H1 (cell line): ENCODE measurements at regions of chr2 and their contacts with region 1.

Region 1: DNA sequence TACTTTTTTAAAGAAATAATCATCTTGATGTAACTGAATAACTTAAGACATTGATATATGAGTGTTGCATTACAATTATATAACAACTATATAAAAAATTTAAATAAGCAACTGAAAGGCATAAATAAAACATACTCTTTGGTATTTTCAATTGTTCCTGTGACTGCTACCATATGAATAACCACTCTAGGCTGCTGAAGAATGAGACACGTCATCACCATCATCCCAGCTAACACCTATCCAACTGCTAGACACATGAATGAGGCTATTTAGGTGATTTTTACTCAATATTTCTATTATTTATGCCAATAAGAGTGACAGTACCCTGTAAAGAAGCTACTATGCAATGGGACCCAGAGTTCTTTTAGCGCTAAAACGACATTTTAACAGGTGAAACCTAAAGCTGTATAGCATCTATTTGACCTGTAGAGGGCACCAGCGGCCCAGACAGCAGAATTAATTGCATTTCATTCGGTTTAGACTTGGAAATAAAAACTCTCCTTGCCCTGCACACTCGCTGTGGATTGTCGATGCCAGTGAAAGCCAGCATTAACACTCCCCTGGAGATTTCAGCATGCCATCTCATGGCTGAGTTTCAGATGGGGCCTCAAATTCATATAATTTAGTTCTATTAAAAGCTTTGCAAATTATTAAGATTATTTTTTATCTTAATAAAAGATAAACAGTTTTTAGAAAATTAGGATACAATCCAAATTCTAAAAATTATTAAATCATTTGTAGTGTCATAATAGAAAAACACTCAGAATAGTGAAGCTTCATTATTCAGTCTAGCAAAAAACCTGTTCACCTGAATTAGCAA is 89.4 kb upstream of the MAP2 start:
- DNase-seq: peak in 1 of 2 experiments; percentile 61
- H3K4me3 ChIP-seq: no peak overlapping the region
- H3K27ac ChIP-seq: no peak overlapping the region
- H3K4me1 ChIP-seq: no peaks in the 10 kb centered on the region
- H3K27me3 ChIP-seq: no peaks in the 10 kb centered on the region
- CTCF ChIP-seq: peak in 2 of 3 experiments; percentile 81 to 83; a peak in 3 of 4 replicates
- EP300 ChIP-seq: no peak
- POLR2A ChIP-seq: no peak
- RAD21 ChIP-seq: peak; percentile 93 to 94

Region 2: DNA sequence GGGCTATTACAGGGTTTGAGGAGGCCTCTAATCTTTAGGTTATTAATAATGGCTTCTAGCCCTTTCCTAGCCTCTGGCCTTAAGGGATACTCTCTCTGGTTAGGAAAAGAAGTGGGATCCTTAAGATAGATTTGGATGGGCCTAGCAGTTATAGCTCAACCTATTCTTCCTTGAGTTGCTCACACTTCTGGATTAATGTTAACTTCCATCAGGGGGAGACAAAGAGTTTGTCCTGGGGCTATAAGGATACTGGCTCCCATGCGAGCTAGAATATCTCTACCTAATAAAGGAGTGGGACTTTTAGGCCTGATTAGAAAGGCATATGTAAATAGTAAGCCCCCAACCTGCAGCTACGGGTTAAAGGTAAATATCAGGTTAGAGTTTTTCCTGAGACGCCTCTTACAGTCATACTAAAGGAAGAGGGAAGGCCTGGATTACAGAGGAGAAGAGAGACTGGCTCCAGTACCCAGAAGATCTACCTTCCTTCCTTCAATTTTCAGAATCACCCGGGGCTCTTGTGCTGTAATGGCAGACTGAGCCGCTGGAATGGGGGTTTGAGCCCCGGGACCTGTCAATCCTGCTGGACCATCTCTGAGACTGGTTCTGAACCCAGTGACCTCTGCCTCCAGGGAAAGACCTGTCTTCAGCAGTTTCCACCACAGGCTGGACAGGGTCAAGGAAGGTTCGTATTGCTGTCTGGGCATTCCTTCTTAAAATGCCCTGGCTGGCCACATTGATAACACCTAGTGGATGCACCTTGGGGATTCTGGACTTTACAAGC is 941.9 kb before region 1 on chr2:
- CTCF ChIA-PET with region 1: interaction called, 12 read pairs
- POLR2A ChIA-PET with region 1: no interaction called
- DNase-seq: no peak
- H3K4me3 ChIP-seq: no peak overlapping the region
- H3K27ac ChIP-seq: no peak overlapping the region
- H3K4me1 ChIP-seq: no peaks in the 10 kb centered on the region
- H3K27me3 ChIP-seq: no peaks in the 10 kb centered on the region
- CTCF ChIP-seq: peak in 1 of 3 experiments; percentile 22; a peak in 1 of 4 replicates
- EP300 ChIP-seq: no peak
- POLR2A ChIP-seq: no peak
- RAD21 ChIP-seq: no peak

Region 3: GRCh38 chr2:208466151-208466919 is 868.1 kb before region 1 on chr2:
- CTCF ChIA-PET with region 1: interaction called, 10 read pairs
- POLR2A ChIA-PET with region 1: no interaction called
- DNase-seq: peak; percentile 10 to 57
- H3K4me3 ChIP-seq: no peak overlapping the region
- H3K27ac ChIP-seq: no peak overlapping the region
- H3K4me1 ChIP-seq: no peaks in the 10 kb centered on the region
- H3K27me3 ChIP-seq: peaks cover 0 to 3% (median 0%) of the 10 kb centered on the region in 4 experiments; a peak in 2 of 7 replicates
- CTCF ChIP-seq: peak in 2 of 3 experiments; percentile 81 to 90; a peak in 3 of 4 replicates
- EP300 ChIP-seq: no peak
- POLR2A ChIP-seq: no peak
- RAD21 ChIP-seq: peak; percentile 97 to 98

Region 4: DNA sequence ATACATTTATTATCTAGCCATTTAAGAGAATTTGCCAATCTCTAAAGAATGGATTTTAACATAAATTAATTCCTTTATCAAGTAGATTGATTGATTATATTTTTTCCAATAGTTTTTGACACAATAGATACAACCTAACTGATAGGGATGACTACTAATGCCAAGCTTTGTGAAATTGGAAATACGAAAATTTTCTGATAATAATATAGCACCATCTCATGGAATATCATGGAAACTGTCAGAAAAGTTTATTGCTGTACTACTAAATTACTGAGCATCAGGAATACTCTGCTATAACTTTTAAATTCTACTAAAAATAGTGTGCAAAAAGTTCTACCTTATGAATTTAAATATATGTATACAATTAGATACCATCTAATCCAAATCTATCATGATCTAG is 12.4 kb before region 1 on chr2:
- CTCF ChIA-PET with region 1: interaction called, 30 read pairs
- POLR2A ChIA-PET with region 1: no interaction called
- DNase-seq: no peak
- H3K4me3 ChIP-seq: no peak overlapping the region
- H3K27ac ChIP-seq: no peak overlapping the region
- H3K4me1 ChIP-seq: peaks cover 0 to 5% (median 3%) of the 10 kb centered on the region in 4 experiments; a peak in 5 of 7 replicates
- H3K27me3 ChIP-seq: no peaks in the 10 kb centered on the region
- CTCF ChIP-seq: no peak
- EP300 ChIP-seq: no peak
- POLR2A ChIP-seq: no peak
- RAD21 ChIP-seq: peak in 1 of 2 experiments; percentile 25; a peak in 2 of 4 replicates

Region 5: DNA sequence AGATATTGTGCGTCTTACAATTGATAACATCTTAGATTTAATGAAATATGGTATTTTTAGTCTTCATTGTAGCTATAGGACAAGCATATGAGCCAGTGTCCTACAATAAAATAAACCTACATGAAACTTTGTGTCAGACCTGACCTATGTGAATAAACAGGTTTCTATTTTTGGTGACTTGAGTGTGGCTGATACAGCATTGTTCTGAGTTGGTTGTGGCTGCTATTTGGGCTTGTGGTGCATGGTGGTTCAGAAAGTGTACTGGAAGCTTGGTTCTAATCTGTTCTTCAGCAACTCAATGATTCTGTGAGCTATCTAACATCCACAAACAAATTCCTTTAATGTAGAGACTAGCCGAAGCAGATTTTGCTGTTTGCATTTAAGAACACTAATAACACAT is 24.6 kb after region 1 on chr2:
- CTCF ChIA-PET with region 1: interaction called, 13 read pairs
- POLR2A ChIA-PET with region 1: no interaction called
- DNase-seq: no peak
- H3K4me3 ChIP-seq: no peak overlapping the region
- H3K27ac ChIP-seq: no peak overlapping the region
- H3K4me1 ChIP-seq: peaks cover 0 to 5% (median 0%) of the 10 kb centered on the region in 4 experiments; a peak in 1 of 7 replicates
- H3K27me3 ChIP-seq: no peaks in the 10 kb centered on the region
- CTCF ChIP-seq: no peak
- EP300 ChIP-seq: no peak
- POLR2A ChIP-seq: no peak
- RAD21 ChIP-seq: no peak

Region 6: DNA sequence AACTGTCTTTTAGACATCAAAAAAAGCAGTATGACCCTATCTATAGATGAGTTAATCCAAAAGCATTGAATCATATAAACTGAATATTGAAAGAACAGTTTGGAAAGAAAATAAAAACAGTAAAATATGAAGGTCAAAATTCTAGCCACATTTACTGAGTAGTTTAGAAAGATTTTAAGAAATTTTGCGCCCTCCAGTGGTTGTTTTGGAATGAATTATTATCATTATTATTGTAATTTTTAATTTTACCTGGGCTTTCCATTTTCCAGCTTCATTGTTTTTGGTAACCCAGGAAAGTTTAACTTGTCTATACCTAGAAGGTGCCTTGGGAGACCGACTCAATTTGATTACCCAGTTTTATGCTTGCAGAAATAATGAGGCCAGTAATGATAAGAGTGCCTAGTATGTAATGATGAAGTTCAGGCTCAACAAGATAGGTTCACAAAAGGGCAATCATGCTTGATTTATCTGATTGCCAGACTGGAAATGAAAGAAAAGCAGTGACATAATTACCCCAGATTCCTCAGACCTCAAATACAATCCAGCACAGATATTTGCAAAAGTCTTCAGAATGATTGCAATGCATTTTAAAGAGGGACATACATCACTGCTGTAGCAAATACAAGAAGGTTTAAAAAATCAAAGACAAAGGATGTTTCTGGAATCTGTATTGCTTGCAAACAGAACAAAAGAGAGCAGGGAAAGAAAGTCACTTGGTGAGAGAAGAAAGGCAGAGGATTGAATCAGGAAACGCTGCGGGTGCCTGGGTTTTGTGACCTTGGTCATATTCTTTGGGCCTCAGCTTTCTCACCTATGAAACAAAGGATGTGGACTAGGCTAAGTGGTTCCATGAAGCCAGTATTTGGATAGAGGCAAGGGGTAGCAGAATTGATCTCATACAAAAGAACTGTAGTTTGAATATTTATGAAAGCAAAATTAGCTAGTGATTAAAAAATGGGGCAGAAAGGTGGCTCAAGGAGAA is 243.3 kb after region 1 on chr2:
- CTCF ChIA-PET with region 1: interaction called, 11 read pairs
- POLR2A ChIA-PET with region 1: no interaction called
- DNase-seq: no peak
- H3K4me3 ChIP-seq: no peak overlapping the region
- H3K27ac ChIP-seq: no peak overlapping the region
- H3K4me1 ChIP-seq: peaks cover 0 to 11% (median 5%) of the 10 kb centered on the region in 4 experiments; a peak in 5 of 7 replicates
- H3K27me3 ChIP-seq: no peaks in the 10 kb centered on the region
- CTCF ChIP-seq: no peak; a peak in 1 of 4 replicates
- EP300 ChIP-seq: no peak
- POLR2A ChIP-seq: no peak
- RAD21 ChIP-seq: no peak; a peak in 1 of 4 replicates